K562 (cell line): ENCODE measurements at regions of chr3 and their contacts with region 1.

Region 1: GRCh38 chr3:72163809-72164634 is 379.1 kb upstream of the PROK2 start:
- DNase-seq: peak; percentile 69 to 89 (median 76)
- ATAC-seq: peak; percentile 92
- H3K4me3 ChIP-seq: no peak overlapping the region
- H3K27ac ChIP-seq: peak overlapping the region; percentile 77; the same call in 1 of the 3 replicates
- H3K4me1 ChIP-seq: peaks cover 18 to 42% of the 10 kb centered on the region in 2 experiments; a peak in 4 of 5 replicates
- H3K27me3 ChIP-seq: no peaks in the 10 kb centered on the region
- CTCF ChIP-seq: no peak
- EP300 ChIP-seq: peak; percentile 96
- POLR2A ChIP-seq: no peak
- RAD21 ChIP-seq: peak; percentile 7 to 44; a peak in 3 of 4 replicates

Region 2: GRCh38 chr3:71955240-71956068 is 208.6 kb before region 1 on chr3:
- CTCF ChIA-PET with region 1: no interaction called
- POLR2A ChIA-PET with region 1: no interaction called
- in situ Hi-C with region 1: no loop called
- intact Hi-C with region 1: loop called (anchors 2 kb)
- DNase-seq: peak; percentile 21 to 66 (median 35)
- ATAC-seq: peak; percentile 64
- H3K4me3 ChIP-seq: no peak overlapping the region
- H3K27ac ChIP-seq: no peak overlapping the region
- H3K4me1 ChIP-seq: peaks cover 0 to 5% of the 10 kb centered on the region in 2 experiments; a peak in 2 of 5 replicates
- H3K27me3 ChIP-seq: peaks cover 0 to 6% of the 10 kb centered on the region in 2 experiments; a peak in 2 of 5 replicates
- CTCF ChIP-seq: peak; percentile 60 to 71 (median 63)
- EP300 ChIP-seq: peak; percentile 46
- POLR2A ChIP-seq: no peak
- RAD21 ChIP-seq: peak; percentile 68 to 80